Endothelial cell of umbilical vein (primary cell): ENCODE measurements at regions of chr12 and their contacts with region 1.

Region 1: GRCh38 chr12:8544295-8544694 is 3.6 kb upstream of the CLEC4E start:
- DNase-seq: peak; percentile 81
- H3K4me3 ChIP-seq: no peak overlapping the region
- H3K27ac ChIP-seq: no peak overlapping the region
- H3K4me1 ChIP-seq: no peaks in the 10 kb centered on the region
- H3K27me3 ChIP-seq: peaks cover 10 to 22% of the 10 kb centered on the region in 2 experiments
- CTCF ChIP-seq: peak; percentile 74 to 81
- POLR2A ChIP-seq: no peak

Region 2: DNA sequence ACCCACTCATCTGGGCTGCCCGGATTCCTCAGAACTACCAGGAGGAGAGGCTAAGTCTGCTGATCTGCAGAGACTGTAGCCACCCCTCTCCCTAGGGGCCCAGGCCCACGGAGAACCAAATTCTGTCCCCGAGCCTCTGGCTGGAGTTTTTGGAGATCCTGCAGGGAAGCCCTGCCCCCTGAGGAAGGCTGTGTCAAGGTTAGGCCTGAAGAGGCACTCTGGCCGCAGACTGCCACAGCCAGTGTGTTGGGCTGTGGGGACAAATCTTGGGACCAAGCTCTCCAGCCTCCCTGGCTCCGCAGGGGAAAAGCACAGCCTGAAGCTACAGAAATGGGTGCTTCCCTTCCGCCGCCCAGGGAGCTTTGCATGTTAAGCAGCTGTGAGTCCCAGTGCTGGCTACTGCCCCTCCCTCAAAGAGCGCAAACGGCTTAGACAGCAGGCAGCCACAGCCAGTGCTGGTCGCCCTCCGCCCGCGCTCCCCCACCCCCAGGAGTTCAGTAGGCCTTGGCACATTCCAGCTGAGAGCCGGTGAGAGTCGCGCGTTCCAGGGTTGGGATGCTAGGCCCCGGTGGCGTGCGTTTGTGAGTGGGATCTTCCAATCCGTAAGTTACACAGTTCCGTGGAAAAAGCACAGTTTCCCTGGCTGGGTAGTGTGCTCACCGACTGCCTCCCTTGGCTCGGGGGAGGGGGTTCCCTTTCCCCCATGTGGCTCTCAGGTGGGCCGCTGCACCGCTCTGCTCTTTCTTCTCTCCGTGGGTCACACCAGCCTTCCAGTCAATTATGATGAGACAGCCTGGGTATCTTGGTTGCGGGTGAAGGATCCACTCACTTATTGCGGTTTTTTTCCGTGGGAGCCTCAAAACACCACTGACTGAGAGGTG is 16.8 kb before region 1 on chr12:
- CTCF ChIA-PET with region 1: interaction called, 32 read pairs
- POLR2A ChIA-PET with region 1: no interaction called
- dilution Hi-C with region 1: no loop called
- intact Hi-C with region 1: no loop called
- DNase-seq: no peak
- H3K4me3 ChIP-seq: no peak overlapping the region
- H3K27ac ChIP-seq: no peak overlapping the region
- H3K4me1 ChIP-seq: no peaks in the 10 kb centered on the region
- H3K27me3 ChIP-seq: no peaks in the 10 kb centered on the region
- CTCF ChIP-seq: no peak
- POLR2A ChIP-seq: no peak

Region 3: GRCh38 chr12:8590842-8591550 is 46.7 kb after region 1 on chr12:
- CTCF ChIA-PET with region 1: interaction called, 12 read pairs
- POLR2A ChIA-PET with region 1: no interaction called
- dilution Hi-C with region 1: no loop called
- intact Hi-C with region 1: no loop called
- DNase-seq: no peak
- H3K4me3 ChIP-seq: no peak overlapping the region
- H3K27ac ChIP-seq: no peak overlapping the region
- H3K4me1 ChIP-seq: no peaks in the 10 kb centered on the region
- H3K27me3 ChIP-seq: peaks cover 4 to 5% of the 10 kb centered on the region in 2 experiments
- CTCF ChIP-seq: no peak
- POLR2A ChIP-seq: no peak

Region 4: DNA sequence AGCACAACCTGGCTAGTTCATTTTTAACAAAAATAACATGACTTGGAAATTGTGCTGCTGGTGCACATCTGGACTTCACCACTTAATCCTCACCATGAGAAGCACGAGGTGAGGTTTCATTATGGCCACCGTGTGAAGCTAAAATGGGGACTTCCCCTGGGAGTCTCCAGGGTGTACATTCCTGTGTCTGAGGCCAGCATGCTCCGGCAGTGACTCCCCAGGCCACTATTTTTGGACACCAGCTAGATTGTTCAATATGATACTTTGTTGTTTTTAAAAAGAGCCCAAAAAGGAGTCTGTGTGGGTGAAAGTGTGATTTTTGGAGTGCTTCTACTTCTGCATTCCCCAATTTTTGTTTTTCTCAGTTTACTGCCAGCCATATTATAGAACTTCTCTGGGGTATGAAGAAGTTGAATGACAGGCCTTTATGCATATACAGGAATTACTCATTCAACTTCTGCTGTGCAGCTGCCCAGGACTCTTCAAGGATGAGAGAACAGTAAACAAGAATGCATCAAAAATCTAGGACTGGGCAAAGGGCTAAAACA is 85.3 kb after region 1 on chr12:
- CTCF ChIA-PET with region 1: interaction called, 20 read pairs
- POLR2A ChIA-PET with region 1: no interaction called
- dilution Hi-C with region 1: no loop called
- intact Hi-C with region 1: no loop called
- DNase-seq: no peak
- H3K4me3 ChIP-seq: no peak overlapping the region
- H3K27ac ChIP-seq: no peak overlapping the region
- H3K4me1 ChIP-seq: no peaks in the 10 kb centered on the region
- H3K27me3 ChIP-seq: peaks cover 2 to 7% of the 10 kb centered on the region in 2 experiments
- CTCF ChIP-seq: no peak
- POLR2A ChIP-seq: no peak

Region 5: DNA sequence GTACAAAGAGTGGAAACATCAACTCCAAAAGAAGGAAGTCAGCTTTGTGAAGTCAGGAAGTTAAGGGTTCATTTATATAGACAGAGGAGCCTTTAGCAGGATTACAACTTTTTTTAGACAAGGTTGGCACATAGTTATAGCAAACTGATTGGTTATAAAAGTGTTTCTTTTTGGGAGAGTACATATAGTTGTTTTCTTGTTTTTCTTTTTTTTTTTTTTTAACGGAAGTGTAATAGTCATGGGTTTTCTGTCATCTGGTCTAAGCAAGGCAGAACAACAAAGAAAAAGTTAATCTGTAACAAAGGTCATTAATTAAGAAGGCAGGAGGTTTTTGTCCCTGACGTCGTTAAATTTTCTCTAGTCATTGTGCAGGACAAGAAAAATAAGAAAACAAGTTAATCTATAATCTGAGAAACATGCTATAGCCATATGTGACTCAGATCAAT is 131.3 kb after region 1 on chr12:
- CTCF ChIA-PET with region 1: interaction called, 17 read pairs
- POLR2A ChIA-PET with region 1: no interaction called
- dilution Hi-C with region 1: no loop called
- intact Hi-C with region 1: no loop called
- DNase-seq: peak; percentile 51
- H3K4me3 ChIP-seq: no peak overlapping the region
- H3K27ac ChIP-seq: peak overlapping the region; percentile 87
- H3K4me1 ChIP-seq: peaks cover 27% of the 10 kb centered on the region
- H3K27me3 ChIP-seq: no peaks in the 10 kb centered on the region
- CTCF ChIP-seq: no peak
- POLR2A ChIP-seq: no peak

Region 6: GRCh38 chr12:8890313-8891085 is 346.2 kb after region 1 on chr12:
- CTCF ChIA-PET with region 1: interaction called, 63 read pairs
- POLR2A ChIA-PET with region 1: no interaction called
- dilution Hi-C with region 1: no loop called
- intact Hi-C with region 1: loop called (anchors 2 kb)
- DNase-seq: peak; percentile 77
- H3K4me3 ChIP-seq: peak overlapping the region; percentile 42 to 93 (median 63)
- H3K27ac ChIP-seq: no peak overlapping the region
- H3K4me1 ChIP-seq: no peaks in the 10 kb centered on the region
- H3K27me3 ChIP-seq: peaks cover 2% of the 10 kb centered on the region in 2 experiments
- CTCF ChIP-seq: peak; percentile 76 to 83
- POLR2A ChIP-seq: no peak